ENCODE measurements at regions of chr22 and their contacts with region 1.

Region 1: DNA sequence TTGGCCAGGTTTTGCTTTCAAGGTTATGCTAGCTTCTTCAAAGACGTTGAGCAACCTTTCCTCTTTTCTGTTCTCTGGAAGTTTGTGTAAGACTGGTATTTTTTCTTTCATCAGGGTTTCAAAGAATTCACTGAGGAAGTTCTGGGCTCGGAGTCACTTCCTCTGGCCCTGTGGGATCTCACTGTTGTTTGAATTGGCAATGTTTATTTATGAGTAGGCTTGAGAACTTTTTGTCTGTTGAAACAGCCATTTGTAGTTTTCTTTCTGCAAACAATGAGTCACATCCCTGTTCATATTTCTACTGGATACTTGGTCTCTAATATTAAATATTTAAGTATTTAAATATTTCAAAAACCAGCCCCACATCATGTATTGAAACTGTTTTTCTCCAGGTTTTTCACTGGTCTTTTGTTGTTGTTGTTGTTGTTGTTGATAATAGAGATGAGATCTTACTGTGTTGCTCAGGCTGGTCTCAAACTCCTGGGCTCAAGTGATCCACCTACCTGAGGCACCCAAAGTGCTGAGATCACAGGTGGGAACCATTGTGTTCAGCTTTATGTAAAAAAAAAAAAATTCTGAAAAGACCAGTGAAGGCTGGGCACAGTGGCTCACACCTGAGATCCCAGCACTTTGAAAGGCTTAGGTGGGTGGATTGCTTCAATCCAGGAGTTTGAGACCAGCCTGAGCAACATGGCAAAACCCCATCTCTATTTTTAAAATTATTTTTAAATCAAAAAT is 26.9 kb downstream of the SUSD2 start:
- DNase-seq: peak; percentile 98
- H3K4me3 ChIP-seq: peak overlapping the region in 1 of 3 experiments; percentile 46
- H3K27ac ChIP-seq: peak overlapping the region; percentile 99
- H3K4me1 ChIP-seq: peaks cover 43% of the 10 kb centered on the region
- H3K27me3 ChIP-seq: no peaks in the 10 kb centered on the region
- CTCF ChIP-seq: no peak
- POLR2A ChIP-seq: peak; percentile 61

Region 2: DNA sequence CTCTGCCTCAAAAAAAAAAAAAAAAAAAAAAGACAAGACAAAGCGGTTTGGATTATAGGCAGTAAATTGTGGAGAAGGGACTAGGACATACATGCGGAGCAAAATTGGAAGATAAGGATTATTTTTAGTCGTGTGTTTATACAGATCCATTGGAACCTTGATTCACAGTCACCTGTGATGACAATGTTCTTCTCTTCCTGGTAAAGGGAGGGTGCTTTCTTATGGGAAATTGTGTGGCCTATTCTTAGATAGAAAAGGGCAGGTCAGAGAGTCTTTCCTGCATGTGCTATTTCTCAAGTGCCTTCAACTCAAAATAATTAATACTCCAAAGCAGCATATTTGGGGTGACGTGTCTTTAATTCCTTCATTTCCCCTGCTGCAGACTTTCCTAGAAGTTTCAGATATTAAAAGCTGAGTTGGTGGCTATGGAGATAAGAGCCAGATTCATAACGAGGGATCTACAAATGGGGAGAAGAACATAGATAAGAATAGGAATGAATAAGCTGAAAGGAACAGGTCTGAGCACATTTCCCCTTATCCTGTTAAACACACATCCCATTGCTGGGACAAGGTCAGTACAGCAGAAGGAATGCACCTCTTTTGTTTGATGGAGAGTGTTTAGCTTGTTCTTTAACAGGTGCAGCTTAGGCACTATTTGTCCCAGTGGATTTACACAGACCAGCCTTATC is 269.7 kb before region 1 on chr22:
- CTCF ChIA-PET with region 1: no interaction called
- POLR2A ChIA-PET with region 1: no interaction called
- dilution Hi-C with region 1: no loop called
- intact Hi-C with region 1: no loop called
- DNase-seq: peak; percentile 84
- H3K4me3 ChIP-seq: no peak overlapping the region
- H3K27ac ChIP-seq: no peak overlapping the region
- H3K4me1 ChIP-seq: no peaks in the 10 kb centered on the region
- H3K27me3 ChIP-seq: no peaks in the 10 kb centered on the region
- CTCF ChIP-seq: no peak
- POLR2A ChIP-seq: no peak

Region 3: DNA sequence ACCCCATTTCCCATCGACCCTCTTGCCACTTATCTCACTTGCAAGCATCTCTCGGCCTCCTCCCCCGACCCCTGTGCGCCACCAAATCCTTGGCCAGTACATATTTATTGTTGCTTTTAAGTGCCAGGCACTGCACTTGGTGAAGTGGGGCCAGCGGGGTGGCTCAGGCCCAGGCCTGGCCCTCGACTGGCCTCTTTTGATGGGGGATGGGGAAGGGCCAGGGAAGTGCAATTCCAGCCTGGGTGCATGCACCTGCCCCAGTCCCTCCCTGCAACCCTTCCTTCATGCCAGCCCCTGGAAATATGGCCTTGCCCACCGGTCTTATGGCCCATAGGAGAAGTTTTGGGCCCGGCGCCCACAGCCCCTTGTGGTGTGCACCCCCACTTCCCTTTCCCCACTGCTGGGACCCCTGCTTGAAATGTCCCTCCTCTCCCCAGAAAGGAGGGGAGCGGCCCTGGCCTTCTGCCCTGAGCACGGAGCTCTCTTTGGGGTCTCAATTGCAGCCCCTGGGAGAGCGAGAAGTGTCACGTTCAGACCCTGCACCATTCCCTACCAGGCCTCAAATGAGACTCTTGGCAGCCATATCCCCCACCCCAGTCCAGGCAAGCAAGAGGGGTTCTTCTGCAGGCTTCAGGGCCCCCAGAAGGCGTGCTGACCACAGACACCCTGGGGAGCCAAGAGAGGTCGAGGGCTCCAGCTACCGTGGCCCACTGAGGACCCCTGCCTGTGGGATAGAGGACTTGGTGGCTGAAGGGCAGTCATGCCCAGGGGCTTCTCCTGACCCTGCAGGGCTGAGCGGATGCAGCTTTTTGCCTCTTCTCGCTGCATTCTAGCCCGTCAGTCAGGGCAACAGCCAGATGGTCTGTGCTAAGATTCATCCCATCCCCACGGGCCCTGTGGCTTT is 25.9 kb before region 1 on chr22:
- CTCF ChIA-PET with region 1: no interaction called
- POLR2A ChIA-PET with region 1: no interaction called
- dilution Hi-C with region 1: no loop called
- intact Hi-C with region 1: no loop called
- DNase-seq: no peak
- H3K4me3 ChIP-seq: no peak overlapping the region
- H3K27ac ChIP-seq: no peak overlapping the region
- H3K4me1 ChIP-seq: no peaks in the 10 kb centered on the region
- H3K27me3 ChIP-seq: no peaks in the 10 kb centered on the region
- CTCF ChIP-seq: peak in 1 of 2 donors; percentile 39
- POLR2A ChIP-seq: no peak

Region 4: GRCh38 chr22:24244101-24244787 is 36.1 kb after region 1 on chr22:
- CTCF ChIA-PET with region 1: interaction called, 12 read pairs
- POLR2A ChIA-PET with region 1: interaction called, 4 read pairs
- dilution Hi-C with region 1: no loop called
- intact Hi-C with region 1: loop called (anchors 1 kb)
- DNase-seq: peak; percentile 56
- H3K4me3 ChIP-seq: peak overlapping the region in 2 of 3 experiments; percentile 32 to 53
- H3K27ac ChIP-seq: peak overlapping the region; percentile 53
- H3K4me1 ChIP-seq: peaks cover 56% of the 10 kb centered on the region
- H3K27me3 ChIP-seq: no peaks in the 10 kb centered on the region
- CTCF ChIP-seq: no peak
- POLR2A ChIP-seq: no peak